ENCODE measurements at regions of chr9 and their contacts with region 1.

Region 1: DNA sequence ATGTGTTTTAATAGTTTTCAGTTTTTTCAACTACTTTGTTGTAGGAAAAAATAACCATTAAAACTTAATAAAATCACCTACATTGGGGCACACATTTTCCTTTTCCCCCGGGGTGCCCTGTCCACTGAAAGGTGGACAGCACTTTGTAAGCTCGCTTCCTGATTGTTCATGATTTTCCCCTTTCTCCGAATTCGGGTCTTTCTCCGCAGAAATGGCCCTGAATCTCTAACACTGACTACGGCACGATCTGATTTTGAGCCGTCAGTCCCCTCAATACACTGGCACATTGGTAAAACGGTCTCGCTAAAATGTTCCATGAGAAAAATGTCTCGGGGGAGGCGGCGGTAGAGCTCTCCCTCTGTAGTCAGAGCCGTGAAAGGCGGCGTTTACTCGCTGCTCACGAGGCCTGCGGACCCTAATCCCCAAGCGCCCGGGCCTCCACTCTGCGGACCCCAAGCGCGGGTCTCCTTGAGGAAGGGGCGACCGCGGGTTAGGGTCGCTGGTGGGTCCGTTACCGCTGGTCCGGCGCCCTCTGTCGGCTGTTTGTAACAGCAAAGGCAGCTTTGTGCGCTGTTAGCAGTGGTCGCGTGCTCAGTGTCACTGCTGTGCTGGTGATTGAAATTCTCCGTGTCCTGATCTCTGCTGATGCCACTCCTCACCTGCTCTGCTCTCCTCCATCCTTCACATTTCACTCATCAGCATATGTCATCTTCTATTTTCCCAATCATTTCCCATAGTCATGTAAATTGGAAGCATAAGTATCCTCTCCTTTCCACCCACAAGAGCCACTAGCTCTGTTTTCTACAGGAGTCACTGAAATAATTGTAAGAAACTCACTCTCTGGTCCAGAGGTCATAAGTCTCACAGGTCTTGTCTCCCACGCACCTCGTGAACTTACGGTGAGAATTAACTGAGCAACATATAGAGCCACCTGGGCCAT is 10.8 kb upstream of the IFNA2 start:
- DNase-seq: peak; percentile 10
- ATAC-seq: peak; percentile 88
- H3K4me3 ChIP-seq: peak overlapping the region; percentile 43 to 71 (median 53)
- H3K27ac ChIP-seq: no peak overlapping the region
- H3K4me1 ChIP-seq: no peaks in the 10 kb centered on the region
- H3K27me3 ChIP-seq: peaks cover 0 to 1% of the 10 kb centered on the region in 2 experiments; a peak in 1 of 5 replicates
- CTCF ChIP-seq: peak; percentile 91
- EP300 ChIP-seq: no peak
- POLR2A ChIP-seq: no peak
- RAD21 ChIP-seq: peak; percentile 65

Region 2: DNA sequence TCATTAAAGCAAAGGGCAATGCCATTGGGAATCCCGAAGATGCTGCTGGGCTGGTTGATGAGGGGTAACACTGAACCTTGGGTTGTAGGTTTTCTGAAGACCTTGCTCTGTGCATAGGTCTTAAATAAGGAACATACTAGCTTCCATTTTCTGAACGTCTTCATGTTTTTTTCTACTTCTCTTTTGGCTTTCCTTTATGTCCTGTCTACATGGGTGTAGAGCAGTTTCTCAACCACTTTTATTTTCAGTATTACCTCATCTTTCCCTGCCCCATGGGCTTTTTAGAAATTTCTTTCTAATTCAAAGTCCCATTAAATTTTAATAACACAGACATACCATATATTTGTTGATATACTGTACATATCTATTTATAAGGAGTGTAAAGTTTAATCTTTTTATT is 156.1 kb before region 1 on chr9 and contains the start of gene IFNA14:
- CTCF ChIA-PET with region 1: no interaction called
- POLR2A ChIA-PET with region 1: no interaction called
- in situ Hi-C with region 1: no loop called
- intact Hi-C with region 1: loop called (anchors 5 kb)
- DNase-seq: no peak
- ATAC-seq: no peak
- H3K4me3 ChIP-seq: no peak within 1 kb of the TSS
- H3K27ac ChIP-seq: no peak within 1 kb of the TSS
- H3K4me1 ChIP-seq: no peaks in the 10 kb centered on the region
- H3K27me3 ChIP-seq: no peaks in the 10 kb centered on the region
- CTCF ChIP-seq: no peak
- EP300 ChIP-seq: no peak
- POLR2A ChIP-seq: no peak
- RAD21 ChIP-seq: no peak
- total RNA-seq, gene IFNA14: not detected in 2 replicates

Region 3: GRCh38 chr9:21252721-21253547 is 143.1 kb before region 1 on chr9:
- CTCF ChIA-PET with region 1: interaction called, 4 read pairs
- POLR2A ChIA-PET with region 1: no interaction called
- in situ Hi-C with region 1: no loop called
- intact Hi-C with region 1: loop called (anchors 5 kb)
- DNase-seq: peak; percentile 10
- ATAC-seq: peak; percentile 88
- H3K4me3 ChIP-seq: no peak overlapping the region
- H3K27ac ChIP-seq: no peak overlapping the region
- H3K4me1 ChIP-seq: peaks cover 8% of the 10 kb centered on the region
- H3K27me3 ChIP-seq: no peaks in the 10 kb centered on the region
- CTCF ChIP-seq: peak; percentile 37; the same call in 1 of the 2 replicates
- EP300 ChIP-seq: no peak
- POLR2A ChIP-seq: no peak
- RAD21 ChIP-seq: no peak

Region 4: DNA sequence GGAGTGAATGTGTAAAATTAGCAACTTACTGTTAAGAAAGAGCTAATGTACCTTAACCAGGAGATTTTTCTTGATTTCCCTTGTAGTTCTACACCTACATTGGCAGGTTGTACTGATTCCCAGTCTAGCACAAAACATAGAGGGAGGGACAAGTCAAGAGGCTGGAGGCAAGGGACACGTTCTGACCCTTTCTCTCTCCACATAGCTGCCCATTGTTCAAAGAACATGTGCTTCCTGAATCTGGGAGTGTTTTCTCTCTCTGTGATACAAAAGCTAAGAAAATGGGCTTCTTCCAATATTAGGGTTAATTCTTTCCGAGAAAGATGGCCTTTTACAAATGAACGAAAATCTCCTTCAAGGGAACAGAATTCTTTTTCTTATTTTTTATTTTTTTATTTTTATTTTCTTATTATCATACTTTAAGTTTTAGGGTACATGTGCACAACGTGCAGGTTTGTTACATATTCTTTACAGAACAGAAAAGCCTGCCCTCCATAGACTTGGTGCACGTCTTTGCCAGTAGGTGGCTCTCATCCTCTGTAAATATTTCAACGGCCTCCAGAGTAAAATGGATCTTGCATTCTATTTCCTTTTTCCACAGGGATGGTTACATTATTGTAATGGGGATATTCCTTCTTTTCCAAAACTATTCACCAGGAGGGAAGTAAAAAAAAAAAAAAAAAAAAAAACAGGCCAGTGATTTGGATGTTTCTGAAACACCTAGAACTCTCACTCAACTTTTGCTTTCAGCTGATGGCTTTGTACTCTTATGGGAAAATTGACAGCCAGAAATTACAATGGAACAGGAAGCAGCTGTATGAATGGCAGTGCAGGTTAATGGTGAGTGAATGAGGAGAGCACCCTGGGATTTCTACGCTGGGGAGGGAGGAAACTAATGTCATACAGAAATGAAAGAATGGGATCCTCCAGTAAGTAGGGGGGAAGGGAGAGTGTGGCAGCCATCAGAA is 77.8 kb before region 1 on chr9:
- CTCF ChIA-PET with region 1: interaction called, 6 read pairs
- POLR2A ChIA-PET with region 1: no interaction called
- in situ Hi-C with region 1: loop called (anchors 5 kb)
- intact Hi-C with region 1: loop called (anchors 2 kb)
- DNase-seq: peak; percentile 24
- ATAC-seq: peak; percentile 92
- H3K4me3 ChIP-seq: no peak overlapping the region
- H3K27ac ChIP-seq: no peak overlapping the region
- H3K4me1 ChIP-seq: no peaks in the 10 kb centered on the region
- H3K27me3 ChIP-seq: no peaks in the 10 kb centered on the region
- CTCF ChIP-seq: peak; percentile 70
- EP300 ChIP-seq: no peak
- POLR2A ChIP-seq: no peak
- RAD21 ChIP-seq: no peak

Region 5: DNA sequence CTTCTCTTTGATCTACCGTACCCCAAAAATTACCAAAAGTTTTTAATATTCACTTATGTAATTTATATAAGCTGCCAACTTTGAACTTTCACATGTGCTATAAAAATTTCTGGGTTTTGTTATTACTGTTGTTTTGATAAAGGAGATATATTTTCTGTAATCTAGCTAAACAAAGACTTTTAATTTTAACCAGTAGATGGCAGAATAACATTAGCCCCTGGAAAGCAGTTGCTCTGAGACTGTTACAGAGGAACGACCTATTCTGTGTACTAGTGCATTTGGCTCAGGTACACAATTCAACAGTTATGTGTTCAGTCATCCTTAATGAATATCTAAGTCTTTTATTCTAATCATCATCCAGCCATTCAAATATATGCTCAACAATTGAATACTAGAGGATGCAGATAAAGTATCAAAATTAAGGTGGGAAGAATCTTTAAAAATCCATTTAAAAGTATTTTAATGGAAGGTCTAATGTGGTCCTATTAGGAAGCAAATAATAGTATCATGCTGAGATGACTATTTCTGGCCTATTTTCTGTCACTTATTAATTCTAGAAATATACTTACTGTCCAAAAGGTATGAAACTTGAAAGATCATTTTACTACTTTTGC is 69.4 kb before region 1 on chr9:
- CTCF ChIA-PET with region 1: interaction called, 23 read pairs
- POLR2A ChIA-PET with region 1: interaction called, 3 read pairs
- in situ Hi-C with region 1: no loop called
- intact Hi-C with region 1: loop called (anchors 1 kb)
- DNase-seq: peak; percentile 39
- ATAC-seq: peak; percentile 90
- H3K4me3 ChIP-seq: no peak overlapping the region
- H3K27ac ChIP-seq: no peak overlapping the region
- H3K4me1 ChIP-seq: peaks cover 3% of the 10 kb centered on the region; the same call in 1 of the 2 replicates
- H3K27me3 ChIP-seq: no peaks in the 10 kb centered on the region
- CTCF ChIP-seq: peak; percentile 66
- EP300 ChIP-seq: no peak
- POLR2A ChIP-seq: no peak
- RAD21 ChIP-seq: 0 out of 2 replicates have a peak, but pooled peaks have one; percentile 21

Region 6: DNA sequence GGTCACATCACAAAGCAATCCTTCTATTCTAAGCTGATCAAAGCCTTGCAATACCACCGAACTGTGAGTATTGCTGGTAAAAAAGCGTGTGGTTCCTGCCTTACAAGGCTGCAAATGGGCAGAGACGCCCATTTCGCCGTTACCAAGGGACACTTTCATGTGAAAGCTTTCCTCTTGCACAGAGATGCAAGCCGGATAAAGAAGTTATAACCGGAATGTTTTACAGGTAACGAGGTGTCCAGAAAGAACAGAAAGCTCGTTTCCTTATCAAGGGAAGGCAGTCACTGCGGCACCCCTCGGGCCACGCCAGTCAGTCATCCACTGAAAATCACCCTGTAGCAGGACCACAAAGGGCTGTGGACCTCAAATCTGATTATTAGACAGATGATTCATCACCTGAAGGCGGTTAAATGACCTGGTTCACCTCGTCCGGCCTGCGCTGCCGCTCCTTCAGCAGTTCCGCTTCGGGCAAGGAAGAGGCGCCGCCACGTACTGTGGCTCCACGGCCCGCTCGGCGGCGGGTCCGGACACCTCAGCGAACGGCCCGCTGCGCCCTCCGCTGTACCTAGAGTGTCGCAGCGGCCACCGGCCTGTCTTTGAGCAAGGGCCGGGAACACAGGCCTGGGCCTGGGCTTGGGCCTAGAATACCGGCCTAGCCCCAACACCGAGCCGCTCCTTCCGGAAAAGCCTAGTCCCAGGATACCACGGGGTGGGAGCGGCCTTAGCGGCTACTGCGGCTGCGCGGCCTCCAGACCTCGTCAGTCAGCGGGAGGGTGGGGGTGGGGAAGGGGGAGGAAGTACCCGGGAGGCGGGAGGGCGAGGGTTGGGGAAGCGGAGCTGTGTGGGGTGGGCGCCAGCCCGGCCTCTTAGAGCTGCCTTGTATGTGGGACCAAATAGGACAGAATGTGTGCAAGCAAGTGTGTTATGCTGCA is 61.1 kb before region 1 on chr9 and contains the start of gene KLHL9:
- CTCF ChIA-PET with region 1: no interaction called
- POLR2A ChIA-PET with region 1: interaction called, 3 read pairs
- in situ Hi-C with region 1: no loop called
- intact Hi-C with region 1: loop called (anchors 1 kb)
- DNase-seq: peak; percentile 82
- ATAC-seq: peak; percentile 98
- H3K4me3 ChIP-seq: peak within 1 kb of the TSS; percentile 78 to 88 (median 86)
- H3K27ac ChIP-seq: peak within 1 kb of the TSS; percentile 93
- H3K4me1 ChIP-seq: peaks cover 38% of the 10 kb centered on the region
- H3K27me3 ChIP-seq: no peaks in the 10 kb centered on the region; a peak in 1 of 5 replicates
- CTCF ChIP-seq: peak; percentile 18; the same call in 1 of the 2 replicates
- EP300 ChIP-seq: no peak
- POLR2A ChIP-seq: peak; percentile 64 to 67; a peak in 3 of 4 replicates
- RAD21 ChIP-seq: 0 out of 2 replicates have a peak, but pooled peaks have one; percentile 27
- total RNA-seq, gene KLHL9: 17.7 and 32.7 TPM in 2 replicates

Region 7: DNA sequence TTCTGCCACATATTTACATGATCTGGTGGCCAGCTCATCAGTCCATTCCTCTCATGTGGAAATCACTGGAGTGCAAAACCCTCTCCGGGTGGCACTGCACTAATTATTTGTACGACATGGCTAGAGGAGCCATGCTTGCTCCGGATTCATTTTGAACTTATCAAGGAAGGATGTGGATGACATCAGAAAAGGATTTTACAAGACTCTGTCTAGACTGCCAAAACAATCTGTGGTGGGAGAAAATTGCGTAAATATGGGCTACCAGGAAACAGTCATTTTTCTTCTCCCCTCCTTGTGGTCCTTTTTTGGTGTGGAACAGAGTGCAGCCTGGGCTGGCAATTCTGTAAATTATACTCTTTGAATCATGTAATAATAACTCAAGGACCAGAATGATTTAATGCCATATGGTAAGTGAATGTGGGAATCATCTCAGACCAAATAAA is 209.5 kb after region 1 on chr9:
- CTCF ChIA-PET with region 1: no interaction called
- POLR2A ChIA-PET with region 1: no interaction called
- in situ Hi-C with region 1: no loop called
- intact Hi-C with region 1: no loop called
- DNase-seq: no peak
- ATAC-seq: no peak
- H3K4me3 ChIP-seq: no peak overlapping the region
- H3K27ac ChIP-seq: no peak overlapping the region
- H3K4me1 ChIP-seq: no peaks in the 10 kb centered on the region
- H3K27me3 ChIP-seq: no peaks in the 10 kb centered on the region
- CTCF ChIP-seq: no peak
- EP300 ChIP-seq: no peak
- POLR2A ChIP-seq: no peak
- RAD21 ChIP-seq: no peak